ENCODE measurements at regions of chr5 and their contacts with region 1.

Region 1: GRCh38 chr5:96023518-96023917 is 61.9 kb upstream of the ELL2 start:
- DNase-seq: peak; percentile 69
- ATAC-seq: peak; percentile 41; the same call in 1 of the 2 replicates
- H3K4me3 ChIP-seq: no peak overlapping the region
- H3K27ac ChIP-seq: peak overlapping the region; percentile 3; the same call in 1 of the 2 replicates
- H3K4me1 ChIP-seq: peaks cover 17% of the 10 kb centered on the region
- H3K27me3 ChIP-seq: no peaks in the 10 kb centered on the region
- CTCF ChIP-seq: no peak
- POLR2A ChIP-seq: no peak
- RAD21 ChIP-seq: no peak

Region 2: DNA sequence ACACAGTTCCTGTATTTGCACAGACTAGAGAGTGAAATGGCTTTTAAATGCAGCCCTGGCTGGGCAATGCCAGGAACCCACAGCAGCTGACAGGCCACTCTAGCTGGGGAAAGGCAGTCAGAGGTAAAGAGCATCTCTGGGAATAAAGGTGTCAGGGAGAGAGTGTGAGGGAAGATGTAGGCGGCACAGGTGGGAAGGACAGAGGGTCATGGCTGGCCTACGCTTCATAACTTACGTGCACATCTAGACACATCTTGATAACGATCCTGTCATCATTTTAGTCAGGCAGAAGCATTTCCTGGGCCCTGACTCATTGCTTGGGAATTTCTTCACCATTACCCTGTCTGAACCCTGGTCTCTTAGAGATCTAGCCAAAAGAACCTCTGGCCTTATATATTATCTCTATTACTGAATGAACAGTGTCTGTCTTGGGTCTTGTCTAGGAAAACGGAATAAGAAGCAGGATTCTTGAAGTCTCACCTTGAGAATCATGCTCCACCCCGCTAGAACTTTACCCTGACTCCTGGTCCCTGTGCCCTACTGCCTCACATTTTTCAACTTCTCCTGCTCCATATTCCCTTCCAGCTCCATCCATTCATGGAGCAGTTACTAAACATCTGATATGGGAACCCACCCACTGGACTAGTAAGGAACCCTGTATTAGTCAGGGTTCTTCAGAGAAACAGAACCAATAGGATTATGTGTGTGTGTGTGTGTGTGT is 44.5 kb after region 1 on chr5:
- CTCF ChIA-PET with region 1: no interaction called
- POLR2A ChIA-PET with region 1: no interaction called
- dilution Hi-C with region 1: no loop called
- in situ Hi-C with region 1: no loop called
- intact Hi-C with region 1: loop called (anchors 5 kb)
- DNase-seq: peak; percentile 95
- ATAC-seq: peak; percentile 80
- H3K4me3 ChIP-seq: no peak overlapping the region
- H3K27ac ChIP-seq: peak overlapping the region; percentile 89
- H3K4me1 ChIP-seq: peaks cover 22% of the 10 kb centered on the region
- H3K27me3 ChIP-seq: no peaks in the 10 kb centered on the region
- CTCF ChIP-seq: no peak
- POLR2A ChIP-seq: peak; percentile 43; the same call in 1 of the 2 replicates
- RAD21 ChIP-seq: peak; percentile 10; the same call in 1 of the 2 replicates

Region 3: DNA sequence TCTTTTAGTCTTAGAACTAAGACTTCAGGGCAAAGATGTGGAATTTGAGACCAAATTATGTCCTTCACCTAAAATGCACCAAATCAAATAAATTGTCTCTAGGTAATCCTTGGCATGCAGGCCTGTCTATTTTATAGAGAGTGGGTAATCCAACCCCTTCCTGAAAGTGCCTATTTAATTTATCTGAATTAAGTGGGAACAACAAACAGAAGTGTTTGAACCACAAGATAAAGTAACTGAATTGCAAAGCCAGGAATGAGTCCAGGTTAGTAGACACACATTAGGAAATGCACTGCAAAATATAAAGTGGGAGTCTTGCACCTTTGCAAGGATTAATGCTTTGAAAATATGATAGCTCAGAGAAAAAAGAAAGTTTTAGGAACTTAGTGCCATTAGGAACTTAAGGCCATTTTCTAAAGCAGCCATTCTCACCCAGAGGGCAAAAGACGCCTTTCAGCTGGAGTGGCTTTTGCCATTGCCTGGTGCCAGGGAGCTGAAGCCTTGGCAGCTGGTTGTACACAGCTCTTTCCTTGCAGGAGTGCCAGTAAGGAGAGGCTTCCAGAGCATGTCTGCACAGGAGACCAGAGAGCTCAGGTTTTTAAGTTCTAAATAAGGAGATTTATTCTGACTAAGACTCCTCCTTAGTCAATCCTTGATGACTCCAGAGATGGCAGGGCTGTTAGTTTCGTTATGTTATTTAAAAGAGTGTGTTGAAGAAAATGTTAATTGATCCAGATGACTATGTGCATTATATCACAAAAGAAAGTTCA is 89.8 kb after region 1 on chr5:
- CTCF ChIA-PET with region 1: no interaction called
- POLR2A ChIA-PET with region 1: no interaction called
- dilution Hi-C with region 1: no loop called
- in situ Hi-C with region 1: no loop called
- intact Hi-C with region 1: loop called (anchors 5 kb)
- DNase-seq: no peak
- ATAC-seq: no peak
- H3K4me3 ChIP-seq: no peak overlapping the region
- H3K27ac ChIP-seq: no peak overlapping the region
- H3K4me1 ChIP-seq: peaks cover 12% of the 10 kb centered on the region
- H3K27me3 ChIP-seq: no peaks in the 10 kb centered on the region
- CTCF ChIP-seq: no peak
- POLR2A ChIP-seq: no peak
- RAD21 ChIP-seq: no peak

Region 4: DNA sequence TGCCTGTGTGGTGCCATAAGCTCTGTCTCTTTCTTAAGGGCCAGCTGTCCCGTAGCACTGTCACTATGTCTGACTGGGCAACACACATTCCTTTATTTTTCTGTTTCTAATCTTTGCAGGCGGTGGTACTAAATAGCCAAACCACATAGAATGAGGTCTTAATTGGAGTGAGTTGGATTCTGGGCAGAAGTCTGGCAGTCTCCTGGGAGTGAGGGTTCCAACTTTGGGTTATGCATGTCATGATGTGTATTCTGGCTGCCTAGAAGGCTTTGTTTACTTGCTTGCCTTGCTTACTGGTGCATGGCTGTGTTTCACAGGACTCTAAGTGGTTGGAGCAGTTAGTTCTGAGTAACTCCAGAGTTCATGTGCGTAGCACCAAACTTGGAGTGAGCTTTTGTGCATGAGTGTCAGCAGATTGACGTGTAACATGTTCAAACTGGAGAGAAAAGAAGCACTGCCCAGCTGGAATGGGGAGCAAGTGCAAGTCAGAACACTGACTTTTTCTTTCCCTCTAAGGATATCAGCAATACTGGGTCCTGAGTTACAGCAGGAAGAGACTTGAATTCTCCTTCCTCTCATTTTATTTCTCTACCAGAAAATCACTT is 223.7 kb after region 1 on chr5:
- CTCF ChIA-PET with region 1: interaction called, 3 read pairs
- POLR2A ChIA-PET with region 1: no interaction called
- dilution Hi-C with region 1: no loop called
- in situ Hi-C with region 1: no loop called
- intact Hi-C with region 1: loop called (anchors 5 kb)
- DNase-seq: peak; percentile 78
- ATAC-seq: peak; percentile 54
- H3K4me3 ChIP-seq: no peak overlapping the region
- H3K27ac ChIP-seq: peak overlapping the region; percentile 95
- H3K4me1 ChIP-seq: peaks cover 29% of the 10 kb centered on the region
- H3K27me3 ChIP-seq: no peaks in the 10 kb centered on the region
- CTCF ChIP-seq: no peak
- POLR2A ChIP-seq: no peak
- RAD21 ChIP-seq: no peak

Measured in IMR-90 (cell line).